Caco-2 (cell line): ENCODE measurements at regions of chr20 and their contacts with region 1.

Region 1: GRCh38 chr20:57272883-57273535 is 6.6 kb upstream of the BMP7 start:
- DNase-seq: peak in 1 of 2 experiments; percentile 66
- H3K4me3 ChIP-seq: no peak overlapping the region
- H3K4me3 Mint-ChIP-seq: no peak overlapping the region
- H3K27ac Mint-ChIP-seq: no peak overlapping the region
- H3K4me1 ChIP-seq: peaks cover 36% of the 10 kb centered on the region
- H3K4me1 Mint-ChIP-seq: peaks cover 74% of the 10 kb centered on the region
- H3K27me3 ChIP-seq: no peaks in the 10 kb centered on the region
- H3K27me3 Mint-ChIP-seq: no peaks in the 10 kb centered on the region
- CTCF ChIP-seq: peak in 1 of 2 experiments; percentile 5

Region 2: DNA sequence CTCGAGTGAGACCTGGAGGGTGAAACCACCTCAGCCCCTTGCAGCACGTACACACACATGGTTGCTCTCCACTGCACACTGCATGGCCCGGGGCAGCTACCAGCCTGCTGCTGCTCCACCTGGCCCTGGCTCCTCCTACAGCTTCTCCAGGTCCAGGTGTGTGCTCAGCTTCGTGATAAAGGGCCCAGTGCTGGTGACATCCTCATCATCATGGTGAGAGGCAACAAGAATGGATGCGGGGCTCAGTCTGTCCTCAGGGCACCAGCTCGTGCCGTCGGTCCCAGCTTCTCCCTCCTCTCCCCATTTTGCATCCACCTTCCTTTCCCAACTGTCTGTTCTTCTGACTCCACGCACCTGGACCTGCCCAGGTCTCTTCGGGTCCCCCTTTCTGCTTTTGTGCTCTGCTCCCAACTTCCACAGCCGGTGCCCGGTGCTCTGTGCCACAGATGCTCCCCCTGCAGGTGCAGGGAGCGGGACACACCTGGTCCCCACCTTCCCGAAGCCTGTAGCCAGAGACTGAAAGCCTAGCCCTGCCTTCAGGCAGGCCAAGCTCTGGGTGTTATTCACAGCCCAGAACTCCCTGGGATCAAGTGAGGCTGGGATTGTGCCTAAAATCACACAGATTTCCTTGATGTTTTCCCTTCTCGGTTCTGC is 17.9 kb after region 1 on chr20:
- CTCF ChIA-PET with region 1: interaction called, 9 read pairs
- POLR2A ChIA-PET with region 1: interaction called, 7 read pairs
- intact Hi-C with region 1: loop called (anchors 1 kb)
- DNase-seq: peak in 1 of 2 experiments; percentile 66
- H3K4me3 ChIP-seq: no peak overlapping the region
- H3K4me3 Mint-ChIP-seq: no peak overlapping the region
- H3K27ac Mint-ChIP-seq: peak overlapping the region; percentile 28
- H3K4me1 ChIP-seq: peaks cover 91% of the 10 kb centered on the region
- H3K4me1 Mint-ChIP-seq: peaks cover 76% of the 10 kb centered on the region
- H3K27me3 ChIP-seq: no peaks in the 10 kb centered on the region
- H3K27me3 Mint-ChIP-seq: no peaks in the 10 kb centered on the region
- CTCF ChIP-seq: peak; percentile 51 to 74